Lower lobe of right lung (tissue), 2 donors: ENCODE measurements at regions of chr3 and their contacts with region 1.

Region 1: GRCh38 chr3:157532529-157533297 is 29.5 kb upstream of the VEPH1 start:
- DNase-seq: no peak
- ATAC-seq: peak; percentile 92 to 94
- H3K4me3 ChIP-seq: no peak overlapping the region
- H3K27ac ChIP-seq: no peak overlapping the region
- H3K4me1 ChIP-seq: peaks cover 9% of the 10 kb centered on the region
- H3K27me3 ChIP-seq: no peaks in the 10 kb centered on the region
- CTCF ChIP-seq: peak; percentile 69

Region 2: DNA sequence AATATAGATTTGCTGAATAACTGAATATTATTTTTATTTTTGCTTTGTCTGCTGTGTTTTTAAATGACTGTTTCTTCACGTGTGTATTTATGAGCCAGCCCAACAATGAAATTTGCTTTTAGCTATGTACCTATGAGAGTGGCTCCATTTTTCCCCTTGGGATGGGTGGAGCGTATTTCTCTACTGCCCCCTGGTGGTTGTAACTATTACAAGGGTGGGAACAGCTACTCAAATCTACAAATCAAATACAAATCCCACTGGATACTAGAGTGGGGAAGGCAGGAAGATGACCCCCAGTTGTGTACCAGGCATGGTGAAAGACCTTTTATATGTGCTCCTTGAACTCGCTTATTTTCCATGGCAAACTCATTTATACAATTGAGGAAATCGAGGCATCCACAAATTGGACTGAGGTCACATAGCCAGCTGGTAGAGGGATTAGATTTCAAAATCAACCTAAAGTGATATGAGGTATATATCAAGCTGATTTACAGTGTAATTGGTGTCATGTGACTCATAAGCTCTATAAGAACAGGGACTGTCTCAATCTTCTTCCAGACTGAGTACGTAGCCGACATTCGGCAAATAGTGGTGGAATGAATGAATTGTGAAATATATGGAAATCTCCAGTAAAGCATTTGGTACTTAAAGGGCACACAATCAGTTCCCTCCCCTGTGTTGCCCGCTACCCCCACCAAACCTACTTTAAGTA is 40.0 kb after region 1 on chr3:
- intact Hi-C with region 1: loop called (anchors 5 kb)
- DNase-seq: no peak
- ATAC-seq: peak; percentile 80 to 82
- H3K4me3 ChIP-seq: no peak overlapping the region
- H3K27ac ChIP-seq: no peak overlapping the region
- H3K4me1 ChIP-seq: no peaks in the 10 kb centered on the region
- H3K27me3 ChIP-seq: no peaks in the 10 kb centered on the region
- CTCF ChIP-seq: peak; percentile 73

Region 3: DNA sequence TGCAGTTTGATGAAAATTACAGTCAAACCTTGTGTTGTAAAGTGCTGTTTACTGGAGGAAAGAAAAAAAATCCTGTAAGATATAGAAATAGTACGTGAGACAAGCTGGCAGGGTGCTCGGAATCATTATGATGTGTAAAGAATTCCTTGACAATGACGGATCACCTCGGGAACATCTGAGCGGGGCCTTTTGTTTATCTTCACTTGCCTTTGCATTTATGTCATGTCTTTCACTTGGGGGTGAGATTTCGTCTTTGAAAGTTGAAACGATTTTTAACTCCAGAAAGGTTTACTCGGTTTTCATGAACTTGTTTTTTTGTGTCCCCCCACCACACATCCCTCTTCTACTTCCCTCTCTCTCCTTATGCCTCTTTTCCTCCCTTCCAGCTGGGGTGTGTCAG is 98.8 kb after region 1 on chr3:
- intact Hi-C with region 1: no loop called
- DNase-seq: no peak
- ATAC-seq: no peak
- H3K4me3 ChIP-seq: no peak overlapping the region
- H3K27ac ChIP-seq: no peak overlapping the region
- H3K4me1 ChIP-seq: no peaks in the 10 kb centered on the region
- H3K27me3 ChIP-seq: peaks cover 3% of the 10 kb centered on the region
- CTCF ChIP-seq: no peak